ENCODE measurements at regions of chr5 and their contacts with region 1.

Region 1: GRCh38 chr5:172714491-172715421 is 56.2 kb downstream of the DUSP1 start:
- DNase-seq: peak; percentile 62 to 71
- H3K4me3 ChIP-seq: peak overlapping the region in 1 of 3 donors; percentile 7
- H3K27ac ChIP-seq: peak overlapping the region; percentile 64 to 90
- H3K4me1 ChIP-seq: no peaks in the 10 kb centered on the region
- H3K27me3 ChIP-seq: no peaks in the 10 kb centered on the region
- CTCF ChIP-seq: peak; percentile 81 to 86 (median 82)
- POLR2A ChIP-seq: no peak

Region 2: DNA sequence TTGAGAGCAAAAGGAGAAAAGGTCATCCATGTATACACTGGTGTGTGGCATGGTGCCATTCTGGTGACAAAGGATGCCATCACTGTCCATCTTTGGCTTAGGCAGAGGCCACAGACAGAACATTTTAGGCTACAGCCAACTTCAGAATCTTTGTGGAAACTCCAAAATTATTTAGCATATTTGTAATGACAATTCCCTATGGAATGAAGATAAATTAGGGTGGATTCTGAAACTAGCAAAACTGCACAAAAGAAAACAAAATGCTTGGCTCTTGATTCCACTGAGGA is 800.8 kb before region 1 on chr5:
- intact Hi-C with region 1: no loop called
- DNase-seq: no peak
- H3K4me3 ChIP-seq: no peak overlapping the region
- H3K27ac ChIP-seq: no peak overlapping the region
- H3K4me1 ChIP-seq: no peaks in the 10 kb centered on the region
- H3K27me3 ChIP-seq: no peaks in the 10 kb centered on the region
- CTCF ChIP-seq: no peak
- POLR2A ChIP-seq: no peak

Region 3: DNA sequence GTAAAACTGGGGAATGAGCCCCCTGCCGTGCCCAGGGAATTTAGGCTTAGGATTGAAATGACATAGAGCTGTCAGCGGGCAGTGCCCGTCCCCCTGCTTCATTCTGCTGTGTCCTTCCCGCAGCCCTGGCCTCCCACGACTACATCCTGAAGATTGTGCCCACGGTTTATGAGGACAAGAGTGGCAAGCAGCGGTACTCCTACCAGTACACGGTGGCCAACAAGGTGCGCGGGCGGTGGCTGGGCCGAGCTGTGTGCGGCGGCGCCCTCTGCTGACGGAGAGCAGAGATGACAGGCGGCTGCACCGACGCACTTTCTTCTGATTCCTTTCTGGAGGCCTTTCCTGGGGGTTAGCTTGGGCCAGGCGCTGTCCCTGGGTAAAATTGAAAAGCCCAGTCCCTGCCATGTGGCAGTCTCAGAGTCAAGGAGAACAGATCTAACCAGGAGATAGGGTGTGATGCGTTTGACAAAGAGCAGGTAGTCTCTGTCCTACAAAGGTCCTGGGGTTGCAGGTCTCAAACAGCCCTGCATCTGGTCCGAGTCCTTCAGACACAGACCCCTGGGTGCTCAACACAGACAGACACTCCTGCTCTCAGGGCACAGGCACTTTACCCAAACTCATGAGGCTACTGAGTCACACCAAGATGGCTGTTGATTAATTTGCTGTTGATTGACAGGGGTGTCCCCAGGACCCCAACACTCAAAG is 217.7 kb after region 1 on chr5:
- intact Hi-C with region 1: loop called (anchors 5 kb)
- DNase-seq: peak; percentile 64 to 81
- H3K4me3 ChIP-seq: no peak overlapping the region
- H3K27ac ChIP-seq: no peak overlapping the region
- H3K4me1 ChIP-seq: peaks cover 0 to 3% of the 10 kb centered on the region in 2 donors
- H3K27me3 ChIP-seq: no peaks in the 10 kb centered on the region
- CTCF ChIP-seq: peak; percentile 93 to 98 (median 97)
- POLR2A ChIP-seq: no peak

Measured in breast epithelium (tissue), 4 donors.